ENCODE measurements at regions of chr6 and their contacts with region 1.

Region 1: DNA sequence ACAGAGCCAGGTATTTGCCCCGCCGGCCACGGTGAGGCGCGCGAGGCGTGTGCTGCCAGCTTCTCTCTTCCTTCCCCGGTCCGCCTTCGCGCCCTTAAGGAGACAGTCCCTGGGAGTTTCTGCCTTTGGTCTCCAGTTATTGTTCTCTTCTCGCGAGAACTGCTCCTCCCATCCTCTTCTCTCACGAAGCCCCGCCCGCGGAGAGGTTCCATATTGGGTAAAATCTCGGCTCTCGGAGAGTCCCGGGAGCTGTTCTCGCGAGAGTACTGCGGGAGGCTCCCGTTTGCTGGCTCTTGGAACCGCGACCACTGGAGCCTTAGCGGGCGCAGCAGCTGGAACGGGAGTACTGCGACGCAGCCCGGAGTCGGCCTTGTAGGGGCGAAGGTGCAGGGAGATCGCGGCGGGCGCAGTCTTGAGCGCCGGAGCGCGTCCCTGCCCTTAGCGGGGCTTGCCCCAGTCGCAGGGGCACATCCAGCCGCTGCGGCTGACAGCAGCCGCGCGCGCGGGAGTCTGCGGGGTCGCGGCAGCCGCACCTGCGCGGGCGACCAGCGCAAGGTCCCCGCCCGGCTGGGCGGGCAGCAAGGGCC is at the start of gene MAPK14:
- DNase-seq: peak; percentile 100
- H3K4me3 ChIP-seq: peak within 1 kb of the TSS; percentile 96
- H3K27ac ChIP-seq: peak within 1 kb of the TSS; percentile 98
- H3K4me1 ChIP-seq: no peaks in the 10 kb centered on the region
- H3K27me3 ChIP-seq: no peaks in the 10 kb centered on the region
- CTCF ChIP-seq: peak; percentile 82
- total RNA-seq, gene MAPK14: 62.2 to 76.1 TPM

Region 2: DNA sequence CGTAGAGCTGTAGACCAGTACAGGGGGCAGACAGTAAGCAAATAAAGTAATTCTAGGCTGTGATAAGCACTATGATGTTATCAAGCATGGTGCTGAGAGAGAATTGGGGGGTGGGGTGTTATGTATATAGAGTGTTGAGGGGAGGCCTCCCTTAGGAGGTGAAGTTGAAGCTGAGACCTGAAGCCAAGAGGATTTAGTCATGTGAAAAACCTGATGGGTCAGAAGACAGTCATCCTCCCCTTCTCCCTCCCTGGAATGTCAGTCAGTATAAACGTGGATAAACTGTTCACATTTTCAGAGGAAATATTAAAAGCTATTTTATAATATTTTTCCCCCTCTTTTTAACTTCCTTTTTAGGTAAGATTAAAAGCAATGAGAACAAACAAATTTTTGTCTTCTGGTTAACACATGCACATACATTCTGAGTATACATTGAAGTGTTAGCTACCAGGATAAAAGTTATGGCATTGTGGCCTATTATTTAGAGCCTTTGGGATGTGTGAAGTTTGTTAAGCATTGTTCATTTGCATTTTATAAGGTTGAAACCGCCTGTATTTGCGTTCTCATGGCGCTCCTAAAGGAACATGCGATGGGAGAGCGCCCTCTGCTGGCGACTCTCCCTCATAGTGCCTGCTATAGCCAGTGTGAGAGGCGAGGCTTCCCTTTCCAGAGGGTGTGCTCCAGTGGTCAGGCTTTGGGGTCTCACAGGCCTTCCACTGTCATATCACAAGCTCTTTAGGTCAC is 67.3 kb after region 1 on chr6:
- intact Hi-C with region 1: loop called (anchors 2 kb)
- DNase-seq: peak; percentile 91
- H3K4me3 ChIP-seq: no peak overlapping the region
- H3K27ac ChIP-seq: peak overlapping the region; percentile 74
- H3K4me1 ChIP-seq: peaks cover 4% of the 10 kb centered on the region
- H3K27me3 ChIP-seq: no peaks in the 10 kb centered on the region
- CTCF ChIP-seq: peak; percentile 97

Region 3: GRCh38 chr6:36196880-36197548 is 169.4 kb after region 1 on chr6:
- intact Hi-C with region 1: loop called (anchors 5 kb)
- DNase-seq: peak; percentile 100
- H3K4me3 ChIP-seq: peak overlapping the region; percentile 53
- H3K27ac ChIP-seq: peak overlapping the region; percentile 85
- H3K4me1 ChIP-seq: peaks cover 3% of the 10 kb centered on the region
- H3K27me3 ChIP-seq: no peaks in the 10 kb centered on the region
- CTCF ChIP-seq: no peak

Region 4: GRCh38 chr6:36350681-36351571 is 323.3 kb after region 1 on chr6:
- intact Hi-C with region 1: loop called (anchors 10 kb)
- DNase-seq: no peak
- H3K4me3 ChIP-seq: no peak overlapping the region
- H3K27ac ChIP-seq: no peak overlapping the region
- H3K4me1 ChIP-seq: no peaks in the 10 kb centered on the region
- H3K27me3 ChIP-seq: no peaks in the 10 kb centered on the region
- CTCF ChIP-seq: no peak

Measured in colonic mucosa (tissue), 4 donors.